ENCODE measurements at regions of chr1 and their contacts with region 1.

Region 1: DNA sequence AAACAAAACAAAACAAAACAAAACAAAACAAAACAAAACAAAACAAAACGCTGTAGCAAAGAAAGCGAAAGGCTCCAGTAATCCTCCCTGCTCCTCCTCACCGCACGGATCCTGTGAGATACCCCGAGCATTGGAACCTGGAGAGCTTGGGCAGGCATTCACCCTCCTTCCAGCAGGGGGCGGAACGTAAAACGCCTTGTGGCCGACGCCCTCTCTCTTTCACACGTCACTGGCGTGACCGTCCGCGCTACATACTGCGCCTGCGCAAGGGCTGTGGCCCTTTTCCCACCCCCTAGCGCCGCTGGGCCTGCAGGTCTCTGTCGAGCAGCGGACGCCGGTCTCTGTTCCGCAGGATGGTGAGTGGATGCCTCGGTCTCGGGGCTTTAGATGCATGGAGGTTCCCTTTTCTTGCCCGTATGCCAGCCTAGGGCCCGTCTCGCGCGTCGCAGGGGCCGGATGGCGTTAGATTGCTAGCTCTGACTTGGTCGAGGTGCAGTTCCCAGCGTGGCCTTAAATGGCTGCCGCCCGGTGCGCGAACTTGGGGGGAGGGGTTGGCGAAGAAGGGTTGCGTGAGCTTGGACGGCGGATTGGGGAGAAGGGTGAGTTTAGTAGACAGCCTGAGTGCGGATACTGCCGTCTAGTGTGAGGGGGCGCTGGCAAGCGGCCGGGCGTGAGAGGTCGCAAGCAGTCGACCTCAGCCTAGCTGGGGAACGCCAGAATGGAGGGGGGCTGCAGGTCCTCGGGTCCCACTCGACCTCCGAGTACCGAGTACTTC is at the start of gene RPL5:
- DNase-seq: peak; percentile 93 to 99 (median 97)
- ATAC-seq: peak; percentile 86
- H3K4me3 ChIP-seq: peak within 1 kb of the TSS; percentile 96 to 100
- H3K4me3 Mint-ChIP-seq: peak within 1 kb of the TSS; percentile 98
- H3K27ac ChIP-seq: peak within 1 kb of the TSS; percentile 84 to 98
- H3K27ac Mint-ChIP-seq: peak within 1 kb of the TSS; percentile 99
- H3K4me1 ChIP-seq: peaks cover 37% of the 10 kb centered on the region
- H3K4me1 Mint-ChIP-seq: peaks cover 49% of the 10 kb centered on the region
- H3K27me3 ChIP-seq: no peaks in the 10 kb centered on the region
- H3K27me3 Mint-ChIP-seq: no peaks in the 10 kb centered on the region
- CTCF ChIP-seq: peak; percentile 90
- total RNA-seq, gene RPL5: 1,826 to 1,914 TPM

Region 2: GRCh38 chr1:91803847-91804545 is 1028.0 kb before region 1 on chr1:
- CTCF ChIA-PET with region 1: no interaction called
- POLR2A ChIA-PET with region 1: no interaction called
- intact Hi-C with region 1: loop called (anchors 5 to 10 kb)
- DNase-seq: peak; percentile 45 to 96 (median 77)
- ATAC-seq: peak; percentile 55
- H3K4me3 ChIP-seq: peak overlapping the region; percentile 37 to 51
- H3K4me3 Mint-ChIP-seq: peak overlapping the region; percentile 70
- H3K27ac ChIP-seq: peak overlapping the region; percentile 98 to 99
- H3K27ac Mint-ChIP-seq: peak overlapping the region; percentile 97
- H3K4me1 ChIP-seq: peaks cover 34% of the 10 kb centered on the region
- H3K4me1 Mint-ChIP-seq: peaks cover 52% of the 10 kb centered on the region
- H3K27me3 ChIP-seq: no peaks in the 10 kb centered on the region
- H3K27me3 Mint-ChIP-seq: no peaks in the 10 kb centered on the region
- CTCF ChIP-seq: no peak

Region 3: DNA sequence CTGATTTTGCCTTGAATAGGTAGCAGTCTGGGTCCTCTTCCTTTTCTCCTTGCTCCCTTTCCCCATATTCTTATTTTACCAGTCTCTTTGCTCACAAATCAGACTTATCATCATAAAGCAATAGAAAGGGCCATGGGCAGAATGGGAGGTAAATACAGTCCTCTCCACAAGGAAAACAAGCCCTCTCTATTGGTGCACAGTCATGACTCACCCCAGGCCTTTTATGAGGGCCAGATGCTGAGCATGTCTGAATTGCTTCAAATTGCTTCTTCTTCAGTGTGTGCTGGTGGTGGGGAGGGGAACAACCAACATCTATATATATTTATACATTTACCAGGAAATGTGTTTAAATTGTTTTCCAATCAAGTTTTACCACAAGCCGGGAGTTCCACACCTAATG is 420.4 kb before region 1 on chr1:
- CTCF ChIA-PET with region 1: no interaction called
- POLR2A ChIA-PET with region 1: no interaction called
- intact Hi-C with region 1: no loop called
- DNase-seq: no peak
- ATAC-seq: no peak
- H3K4me3 ChIP-seq: no peak overlapping the region
- H3K4me3 Mint-ChIP-seq: no peak overlapping the region
- H3K27ac ChIP-seq: no peak overlapping the region
- H3K27ac Mint-ChIP-seq: peak overlapping the region; percentile 75
- H3K4me1 ChIP-seq: peaks cover 28% of the 10 kb centered on the region
- H3K4me1 Mint-ChIP-seq: peaks cover 37% of the 10 kb centered on the region
- H3K27me3 ChIP-seq: no peaks in the 10 kb centered on the region
- H3K27me3 Mint-ChIP-seq: no peaks in the 10 kb centered on the region
- CTCF ChIP-seq: no peak

Region 4: GRCh38 chr1:92784639-92785500 is 47.1 kb before region 1 on chr1 and contains the start of gene EVI5:
- CTCF ChIA-PET with region 1: interaction called, 3 read pairs
- POLR2A ChIA-PET with region 1: interaction called, 5 read pairs
- intact Hi-C with region 1: loop called in 1 of 2 experiments (anchors 2 kb)
- DNase-seq: peak; percentile 24 to 76 (median 49)
- ATAC-seq: peak; percentile 80
- H3K4me3 ChIP-seq: peak within 1 kb of the TSS; percentile 54 to 69
- H3K4me3 Mint-ChIP-seq: peak within 1 kb of the TSS; percentile 80
- H3K27ac ChIP-seq: no peak within 1 kb of the TSS
- H3K27ac Mint-ChIP-seq: no peak within 1 kb of the TSS
- H3K4me1 ChIP-seq: peaks cover 19% of the 10 kb centered on the region
- H3K4me1 Mint-ChIP-seq: peaks cover 20% of the 10 kb centered on the region
- H3K27me3 ChIP-seq: peaks cover 0 to 25% of the 10 kb centered on the region in 2 experiments
- H3K27me3 Mint-ChIP-seq: peaks cover 50% of the 10 kb centered on the region
- CTCF ChIP-seq: no peak
- total RNA-seq, gene EVI5: 0.25 to 1.2 TPM

Region 5: DNA sequence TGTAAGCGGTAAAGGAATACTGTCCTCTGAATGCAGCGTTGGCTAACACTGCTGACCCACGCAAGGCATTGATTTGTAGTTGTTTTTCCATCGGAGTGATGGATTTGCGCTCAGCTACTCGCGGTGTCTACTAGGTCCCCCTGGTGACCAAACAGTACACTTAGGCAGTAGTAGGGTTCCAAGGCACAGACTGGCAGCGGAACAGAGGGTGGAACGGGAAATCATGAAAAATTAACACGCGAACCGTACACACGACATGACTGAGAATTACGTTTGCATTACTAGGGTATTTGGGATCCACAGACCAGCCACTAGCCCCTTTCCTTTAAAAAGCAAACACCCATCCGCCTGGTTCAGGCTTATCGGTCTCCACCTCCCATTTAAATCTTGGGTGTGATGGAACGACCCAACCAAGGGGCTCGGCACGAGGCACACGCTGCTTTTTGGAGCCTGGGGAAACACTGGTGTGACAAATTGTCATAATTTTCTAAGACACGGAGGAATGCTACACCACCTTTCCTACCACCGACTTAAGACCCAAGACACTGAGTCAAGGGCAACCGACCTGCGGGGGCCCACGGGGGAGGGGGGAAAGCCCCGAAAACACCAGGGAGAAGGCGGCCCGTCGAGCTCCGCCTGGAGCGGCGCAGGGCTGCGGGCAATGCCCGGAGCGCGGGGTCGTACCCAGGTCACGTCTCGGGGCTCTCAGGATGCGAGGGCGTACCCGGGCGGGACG is 128.6 kb after region 1 on chr1:
- CTCF ChIA-PET with region 1: interaction called, 13 read pairs
- POLR2A ChIA-PET with region 1: interaction called, 35 read pairs
- intact Hi-C with region 1: loop called in 1 of 2 experiments (anchors 1 kb)
- DNase-seq: peak; percentile 40 to 90 (median 62)
- ATAC-seq: peak; percentile 41
- H3K4me3 ChIP-seq: peak overlapping the region; percentile 81 to 82
- H3K4me3 Mint-ChIP-seq: peak overlapping the region; percentile 92
- H3K27ac ChIP-seq: peak overlapping the region; percentile 85 to 87
- H3K27ac Mint-ChIP-seq: peak overlapping the region; percentile 96
- H3K4me1 ChIP-seq: peaks cover 57% of the 10 kb centered on the region
- H3K4me1 Mint-ChIP-seq: peaks cover 40% of the 10 kb centered on the region
- H3K27me3 ChIP-seq: no peaks in the 10 kb centered on the region
- H3K27me3 Mint-ChIP-seq: no peaks in the 10 kb centered on the region
- CTCF ChIP-seq: peak; percentile 58

Region 6: DNA sequence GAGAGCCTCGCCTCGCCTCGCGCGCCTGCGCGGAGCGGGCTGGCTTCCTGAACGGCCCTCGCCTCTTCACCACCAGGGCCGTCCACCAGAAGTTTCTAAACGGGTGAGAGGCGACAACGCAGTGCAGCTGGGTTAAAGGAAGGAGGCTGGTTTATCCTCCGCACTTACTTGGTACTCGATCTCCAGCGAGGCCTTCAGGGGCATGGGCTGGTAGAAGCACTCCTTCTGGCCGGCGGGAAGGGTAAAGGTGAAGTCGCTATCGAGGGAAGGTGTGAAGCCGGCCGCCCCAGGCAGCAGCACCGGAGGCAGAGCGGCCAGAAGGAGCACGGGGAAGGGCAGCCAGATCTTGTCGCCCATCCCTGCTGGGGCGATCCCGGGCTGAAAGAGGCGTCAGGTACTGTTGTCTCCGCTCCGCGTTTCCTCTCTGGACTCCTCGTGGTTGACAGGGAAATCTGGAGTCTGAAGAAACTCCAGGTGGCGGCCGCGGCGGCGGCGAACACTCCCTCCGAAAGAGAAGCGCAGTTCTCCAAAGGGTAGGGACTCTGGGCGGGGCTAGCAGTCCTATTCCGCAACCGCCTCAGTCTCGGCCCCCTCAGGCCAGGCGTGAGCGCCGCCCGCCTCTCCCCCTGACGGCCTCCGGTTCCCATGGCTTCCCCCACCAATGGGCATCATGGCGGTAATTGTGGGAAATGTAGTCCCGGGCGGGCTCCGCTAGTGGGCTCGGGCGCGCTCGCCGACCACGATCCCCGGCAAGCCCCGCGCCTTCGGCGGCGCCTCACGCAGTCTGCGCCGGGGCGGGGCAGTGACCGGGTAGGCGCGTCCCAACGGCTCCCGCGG is 348.2 kb after region 1 on chr1 and contains the start of gene TMED5:
- CTCF ChIA-PET with region 1: no interaction called
- POLR2A ChIA-PET with region 1: interaction called, 5 read pairs
- intact Hi-C with region 1: loop called (anchors 2 to 5 kb)
- DNase-seq: peak; percentile 90 to 98 (median 95)
- ATAC-seq: peak; percentile 81
- H3K4me3 ChIP-seq: peak within 1 kb of the TSS; percentile 75 to 97
- H3K4me3 Mint-ChIP-seq: peak within 1 kb of the TSS; percentile 91
- H3K27ac ChIP-seq: peak within 1 kb of the TSS; percentile 83 to 98
- H3K27ac Mint-ChIP-seq: peak within 1 kb of the TSS; percentile 97
- H3K4me1 ChIP-seq: peaks cover 33% of the 10 kb centered on the region
- H3K4me1 Mint-ChIP-seq: peaks cover 49% of the 10 kb centered on the region
- H3K27me3 ChIP-seq: no peaks in the 10 kb centered on the region
- H3K27me3 Mint-ChIP-seq: no peaks in the 10 kb centered on the region
- CTCF ChIP-seq: peak; percentile 32
- total RNA-seq, gene TMED5: 38.3 to 38.8 TPM

Region 7: DNA sequence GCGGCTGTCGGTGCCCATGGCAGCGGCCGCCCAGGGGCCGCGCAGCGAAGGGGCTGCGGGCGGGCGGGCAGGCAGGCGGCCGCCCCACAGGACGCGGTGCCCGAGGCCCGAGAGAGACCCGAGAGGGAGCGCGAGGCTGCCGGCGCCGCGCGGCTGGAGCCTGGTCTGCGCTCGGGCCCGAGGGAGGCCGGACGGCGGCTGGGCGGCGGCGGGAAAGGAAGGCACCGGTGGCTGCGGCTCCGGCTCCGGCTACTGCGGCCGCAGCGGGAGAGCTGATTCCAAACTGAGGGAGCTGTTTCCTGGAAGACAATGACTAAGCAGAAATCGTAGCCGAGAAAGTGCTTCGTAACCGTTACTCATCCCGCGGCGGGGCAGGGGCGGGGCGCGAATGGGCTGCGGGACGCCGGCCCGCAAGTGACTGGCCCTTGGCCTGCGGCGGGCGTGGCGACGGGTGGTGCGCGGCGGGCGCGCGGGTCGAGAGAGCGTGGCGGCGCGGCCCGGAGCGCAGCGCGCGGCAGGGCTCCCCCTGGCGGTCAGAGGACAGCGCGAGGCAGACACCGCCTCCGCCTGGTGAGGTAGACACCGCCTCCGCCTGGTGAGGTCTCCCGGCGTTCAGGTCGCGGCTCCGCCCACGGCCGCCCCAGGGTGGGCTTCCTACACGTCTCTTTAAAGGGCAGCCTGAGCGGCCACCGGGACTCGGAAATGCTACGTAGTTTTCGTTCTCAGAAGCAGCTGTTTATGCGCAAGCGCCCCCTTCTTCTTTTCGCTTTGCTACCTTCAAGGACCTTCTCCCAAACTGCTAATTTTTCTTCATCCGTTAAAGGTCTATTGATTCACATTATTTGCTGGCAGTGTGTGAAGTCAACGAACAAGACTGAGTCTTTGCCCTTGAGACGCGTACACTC is 1077.4 kb after region 1 on chr1 and contains the start of gene GCLM:
- CTCF ChIA-PET with region 1: no interaction called
- POLR2A ChIA-PET with region 1: no interaction called
- intact Hi-C with region 1: loop called in 1 of 2 experiments (anchors 10 kb)
- DNase-seq: peak; percentile 76 to 95 (median 91)
- ATAC-seq: peak; percentile 89
- H3K4me3 ChIP-seq: peak within 1 kb of the TSS; percentile 62 to 67
- H3K4me3 Mint-ChIP-seq: peak within 1 kb of the TSS; percentile 88
- H3K27ac ChIP-seq: peak within 1 kb of the TSS; percentile 72 to 76
- H3K27ac Mint-ChIP-seq: peak within 1 kb of the TSS; percentile 92
- H3K4me1 ChIP-seq: peaks cover 12% of the 10 kb centered on the region
- H3K4me1 Mint-ChIP-seq: peaks cover 37% of the 10 kb centered on the region
- H3K27me3 ChIP-seq: no peaks in the 10 kb centered on the region
- H3K27me3 Mint-ChIP-seq: no peaks in the 10 kb centered on the region
- CTCF ChIP-seq: peak; percentile 86
- total RNA-seq, gene GCLM: 6.4 to 6.8 TPM